Heart left ventricle (tissue), 16 donors: ENCODE measurements at regions of chr16 and their contacts with region 1.

Region 1: DNA sequence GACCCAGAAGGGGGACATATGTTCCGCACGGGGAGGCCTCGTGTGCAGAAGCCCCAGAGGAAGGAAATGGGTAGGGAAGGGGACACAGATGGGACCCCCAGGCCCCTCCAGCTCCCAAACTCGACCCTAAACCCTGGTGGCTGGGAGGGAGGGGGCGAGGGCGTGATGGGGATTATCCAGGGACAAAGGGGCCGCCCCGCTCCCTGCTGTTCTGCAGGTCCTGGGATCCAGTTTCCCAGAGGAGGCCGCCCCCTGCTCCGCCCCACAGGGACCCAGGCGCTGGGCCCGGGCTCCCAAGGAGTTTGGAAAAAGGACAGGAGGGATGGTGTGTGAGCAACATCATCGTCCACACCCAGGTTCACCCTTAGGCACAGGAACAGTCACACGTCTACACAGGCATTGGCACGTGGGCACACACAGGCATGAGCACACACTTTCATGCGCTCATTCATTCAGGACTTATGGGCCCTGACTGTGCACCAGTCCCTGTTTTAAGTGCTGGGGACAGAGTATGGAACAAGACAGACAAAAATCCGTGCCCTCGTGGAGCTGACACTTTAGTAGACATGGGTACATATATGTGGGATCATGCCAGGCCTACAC is 12.8 kb upstream of the FBXL19 start:
- DNase-seq: no peak
- ATAC-seq: no peak
- H3K4me3 ChIP-seq: no peak overlapping the region
- H3K27ac ChIP-seq: no peak overlapping the region
- H3K4me1 ChIP-seq: no peaks in the 10 kb centered on the region
- H3K27me3 ChIP-seq: no peaks in the 10 kb centered on the region
- CTCF ChIP-seq: no peak
- POLR2A ChIP-seq: no peak

Region 2: GRCh38 chr16:30747799-30748634 is 162.5 kb before region 1 on chr16 and contains the start of gene PHKG2:
- intact Hi-C with region 1: loop called in 1 of 10 experiments (anchors 10 kb)
- DNase-seq: peak; percentile 99 to 100 (median 99)
- ATAC-seq: peak; percentile 98 to 99 (median 99)
- H3K4me3 ChIP-seq: peak within 1 kb of the TSS; percentile 64 to 97 (median 78)
- H3K27ac ChIP-seq: peak within 1 kb of the TSS in 11 of 12 donors; percentile 59 to 84 (median 75)
- H3K4me1 ChIP-seq: peaks cover 0 to 20% (median 5%) of the 10 kb centered on the region in 12 donors
- H3K27me3 ChIP-seq: no peaks in the 10 kb centered on the region
- CTCF ChIP-seq: no peak
- POLR2A ChIP-seq: peak in 1 of 2 donors; percentile 58
- total RNA-seq, gene PHKG2: 13.5 to 26.7 (median 17.9) TPM

Region 3: GRCh38 chr16:30957456-30958174 is 47.1 kb after region 1 on chr16 and contains the start of gene SETD1A:
- intact Hi-C with region 1: no loop called
- DNase-seq: peak; percentile 98 to 99 (median 98)
- ATAC-seq: peak; percentile 90 to 96 (median 91)
- H3K4me3 ChIP-seq: peak within 1 kb of the TSS; percentile 37 to 93 (median 82)
- H3K27ac ChIP-seq: peak within 1 kb of the TSS; percentile 86 to 99 (median 98)
- H3K4me1 ChIP-seq: peaks cover 0 to 37% (median 24%) of the 10 kb centered on the region in 12 donors
- H3K27me3 ChIP-seq: no peaks in the 10 kb centered on the region
- CTCF ChIP-seq: peak in 1 of 12 donors; percentile 7
- POLR2A ChIP-seq: peak in 1 of 2 donors; percentile 44
- total RNA-seq, gene SETD1A: 4.6 to 12.1 (median 9.0) TPM